Astrocyte of the cerebellum (primary cell): ENCODE measurements at regions of chr12 and their contacts with region 1.

Region 1: DNA sequence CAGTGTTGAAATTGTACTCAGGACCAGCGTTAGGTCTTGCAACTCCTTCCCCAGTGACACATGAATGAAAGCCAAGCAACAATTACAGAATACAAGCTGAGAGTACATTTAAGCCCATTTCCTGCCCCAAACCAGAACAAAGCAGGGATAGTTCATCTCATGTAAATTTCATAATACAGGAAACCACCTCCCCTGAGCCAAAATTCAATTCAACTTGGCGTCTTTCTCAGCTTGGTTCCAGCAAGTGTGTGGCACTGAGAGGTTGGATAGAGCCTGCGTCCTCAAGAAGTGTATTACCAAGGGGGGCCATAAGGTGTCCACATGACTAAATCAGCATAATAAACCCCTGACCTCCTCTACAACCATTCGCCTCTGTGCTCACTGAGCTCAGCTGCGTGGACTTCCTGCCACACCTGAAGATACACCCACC is 278.9 kb upstream of the CRY1 start:
- DNase-seq: peak; percentile 67
- H3K4me3 ChIP-seq: no peak overlapping the region
- CTCF ChIP-seq: peak; percentile 5

Region 2: DNA sequence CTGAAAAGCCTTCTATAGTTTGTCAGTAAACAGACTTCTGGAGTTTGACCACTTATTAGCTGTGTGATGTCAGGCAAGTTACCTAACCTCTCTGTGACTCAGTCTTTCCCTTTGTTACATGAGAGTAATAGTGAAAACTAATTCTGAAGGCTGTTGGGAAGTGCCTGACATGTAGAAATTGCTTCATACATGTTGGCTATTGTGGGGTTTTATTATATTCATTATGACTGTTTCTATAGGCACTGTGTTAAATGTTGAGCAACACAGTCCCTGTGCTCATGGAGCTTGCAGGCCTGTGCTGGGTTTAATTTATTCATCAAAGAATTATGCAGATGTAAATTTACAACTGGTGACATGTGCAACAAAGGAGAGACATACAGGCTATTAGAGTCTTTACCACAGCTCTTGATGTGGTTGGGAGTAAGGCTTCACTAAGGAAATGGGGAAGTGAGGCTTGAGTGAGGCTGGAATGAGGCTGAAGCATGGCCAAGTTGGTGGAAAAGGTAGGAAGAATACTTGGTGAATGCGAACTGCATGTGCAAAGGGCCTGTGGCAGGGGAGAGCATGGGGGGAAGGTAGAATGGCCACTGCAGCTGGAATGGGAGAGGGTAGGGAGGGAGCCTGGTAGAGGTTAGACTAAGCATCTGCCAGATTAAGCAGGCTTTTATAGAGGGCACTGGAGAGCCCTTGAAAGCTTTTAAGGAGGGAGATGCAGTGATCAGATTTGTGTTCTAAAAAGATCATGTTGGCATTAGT is 42.5 kb before region 1 on chr12:
- in situ Hi-C with region 1: loop called (anchors 5 kb)
- DNase-seq: no peak
- H3K4me3 ChIP-seq: no peak overlapping the region
- CTCF ChIP-seq: no peak